BJ (cell line): ENCODE measurements at regions of chr18 and their contacts with region 1.

Region 1: GRCh38 chr18:57881818-57882413 is 78.8 kb upstream of the ATP8B1 start:
- DNase-seq: peak; percentile 33
- H3K4me3 ChIP-seq: no peak overlapping the region
- H3K27me3 ChIP-seq: no peaks in the 10 kb centered on the region
- CTCF ChIP-seq: peak; percentile 93

Region 2: DNA sequence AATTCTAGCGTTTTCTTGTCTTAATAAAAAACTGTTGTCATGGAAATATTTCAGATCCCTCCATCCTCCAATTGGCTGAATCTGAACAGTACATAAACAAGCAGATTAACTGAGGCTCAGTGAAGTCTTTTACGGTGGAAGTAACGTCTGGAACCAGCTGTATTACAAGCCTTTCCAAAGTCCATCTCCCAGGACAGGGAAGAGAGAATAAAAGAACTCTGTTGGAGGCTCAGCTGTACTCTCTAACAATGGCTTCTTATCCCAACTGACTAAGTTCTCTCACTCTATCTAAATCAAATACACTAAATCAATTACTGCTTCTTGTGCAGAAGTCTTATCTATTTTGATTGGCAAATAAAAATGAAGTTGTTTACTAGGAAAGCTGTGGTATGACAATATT is 142.2 kb after region 1 on chr18:
- CTCF ChIA-PET with region 1: no interaction called
- POLR2A ChIA-PET with region 1: no interaction called
- DNase-seq: no peak
- H3K4me3 ChIP-seq: no peak overlapping the region
- H3K27me3 ChIP-seq: peaks cover 4% of the 10 kb centered on the region
- CTCF ChIP-seq: no peak

Region 3: GRCh38 chr18:58117786-58118403 is 236.0 kb after region 1 on chr18:
- CTCF ChIA-PET with region 1: interaction called, 11 read pairs
- POLR2A ChIA-PET with region 1: no interaction called
- DNase-seq: no peak
- H3K4me3 ChIP-seq: no peak overlapping the region
- H3K27me3 ChIP-seq: no peaks in the 10 kb centered on the region; the same call in 1 of the 2 replicates
- CTCF ChIP-seq: no peak